GM23248 (cell line): ENCODE measurements at regions of chr12 and their contacts with region 1.

Region 1: GRCh38 chr12:2057041-2057794 is 4.4 kb downstream of the CACNA1C start:
- DNase-seq: peak; percentile 64
- H3K4me3 ChIP-seq: no peak overlapping the region
- H3K27ac ChIP-seq: no peak overlapping the region
- H3K4me1 ChIP-seq: peaks cover 12% of the 10 kb centered on the region
- H3K27me3 ChIP-seq: no peaks in the 10 kb centered on the region

Region 2: DNA sequence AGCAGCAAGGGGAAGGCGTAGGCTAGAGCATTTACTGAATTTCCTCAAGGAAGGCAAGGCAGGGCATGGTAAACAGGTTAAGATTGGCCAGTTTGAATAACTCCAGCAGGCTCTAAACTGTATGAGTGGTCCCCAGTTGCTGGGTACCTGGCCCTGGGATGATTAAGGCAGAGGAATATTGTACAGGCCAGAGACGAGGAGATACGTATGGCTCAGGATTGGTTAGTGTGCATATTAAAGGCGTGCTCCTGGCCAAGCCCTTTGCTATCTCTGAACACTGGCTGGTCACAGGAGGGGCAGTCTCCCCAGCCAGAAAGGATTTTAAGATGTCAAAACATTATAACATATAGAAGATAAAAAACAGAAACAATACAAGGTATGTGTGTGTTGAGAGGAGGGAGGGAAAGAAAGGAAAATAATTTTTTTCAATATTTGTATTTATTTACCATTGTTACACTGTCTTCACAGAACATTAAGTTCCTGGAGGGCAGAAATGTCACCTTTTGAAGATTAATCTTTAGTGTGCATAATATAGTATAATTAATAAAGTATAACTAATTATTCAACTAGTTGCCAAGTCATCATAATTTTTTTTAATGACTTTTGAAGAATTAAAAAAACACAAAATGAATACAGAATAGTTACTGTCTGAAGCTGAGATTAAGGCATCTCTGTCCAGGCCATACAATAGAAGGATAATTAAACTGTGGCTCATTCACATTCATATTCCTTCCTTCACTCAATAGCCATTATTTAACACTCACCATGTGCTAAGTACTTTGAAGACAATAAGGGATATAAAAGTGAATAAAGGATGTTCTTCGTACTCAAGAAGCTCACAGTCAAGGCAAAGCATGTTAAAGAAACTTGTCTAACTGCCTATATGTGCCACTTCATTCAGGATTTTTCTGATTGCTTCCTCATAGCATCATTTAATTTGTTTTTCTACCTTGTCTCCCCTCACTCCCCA is 94.9 kb before region 1 on chr12:
- in situ Hi-C with region 1: no loop called
- DNase-seq: no peak
- H3K4me3 ChIP-seq: no peak overlapping the region
- H3K27ac ChIP-seq: no peak overlapping the region
- H3K4me1 ChIP-seq: no peaks in the 10 kb centered on the region
- H3K27me3 ChIP-seq: no peaks in the 10 kb centered on the region

Region 3: DNA sequence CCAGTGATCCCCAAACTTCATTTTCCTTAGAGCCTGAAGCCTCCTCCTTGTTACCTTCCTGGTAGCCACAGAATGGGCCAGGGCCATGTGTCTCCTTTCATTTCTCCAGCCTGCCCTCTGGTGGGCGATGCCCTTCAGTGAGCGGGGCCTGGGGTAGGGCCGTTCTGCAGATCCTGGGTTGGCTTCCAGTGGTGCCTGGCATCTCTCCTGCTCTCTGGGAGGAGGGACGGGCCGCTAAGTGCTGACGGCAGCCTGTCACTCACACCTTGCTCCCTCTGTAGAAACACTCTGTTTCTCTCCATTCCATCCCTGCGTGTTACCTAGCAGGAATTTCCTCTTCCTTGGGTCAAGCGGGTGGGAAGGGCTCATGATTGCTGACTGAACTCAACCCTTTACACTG is 227.6 kb after region 1 on chr12:
- in situ Hi-C with region 1: loop called (anchors 10 kb)
- DNase-seq: peak; percentile 89
- H3K4me3 ChIP-seq: peak overlapping the region; percentile 57
- H3K27ac ChIP-seq: peak overlapping the region; percentile 94
- H3K4me1 ChIP-seq: peaks cover 68% of the 10 kb centered on the region
- H3K27me3 ChIP-seq: no peaks in the 10 kb centered on the region

Region 4: DNA sequence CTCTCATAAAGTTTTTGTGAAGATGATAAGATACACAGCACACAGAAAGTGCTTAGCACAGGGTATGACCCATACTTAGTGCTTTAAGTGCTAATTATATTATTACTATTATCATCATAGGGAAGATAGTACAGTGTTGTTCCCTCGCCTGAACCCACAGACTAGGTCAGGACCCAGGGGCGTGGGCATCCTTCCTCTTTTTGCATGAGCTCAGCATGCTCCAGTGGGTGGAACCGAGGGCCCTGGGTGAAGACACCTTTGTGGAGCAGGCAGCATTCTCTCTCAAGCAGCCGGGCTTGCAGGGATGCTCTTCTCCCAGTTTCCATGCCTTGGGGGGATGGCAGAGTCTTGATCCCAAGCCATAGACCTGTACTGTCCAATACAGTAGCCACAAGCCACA is 1660.9 kb after region 1 on chr12:
- in situ Hi-C with region 1: no loop called
- DNase-seq: no peak
- H3K4me3 ChIP-seq: no peak overlapping the region
- H3K27ac ChIP-seq: no peak overlapping the region
- H3K4me1 ChIP-seq: no peaks in the 10 kb centered on the region
- H3K27me3 ChIP-seq: no peaks in the 10 kb centered on the region; the same call in 1 of the 2 replicates